Panc1 (cell line): ENCODE measurements at regions of chr6 and their contacts with region 1.

Region 1: DNA sequence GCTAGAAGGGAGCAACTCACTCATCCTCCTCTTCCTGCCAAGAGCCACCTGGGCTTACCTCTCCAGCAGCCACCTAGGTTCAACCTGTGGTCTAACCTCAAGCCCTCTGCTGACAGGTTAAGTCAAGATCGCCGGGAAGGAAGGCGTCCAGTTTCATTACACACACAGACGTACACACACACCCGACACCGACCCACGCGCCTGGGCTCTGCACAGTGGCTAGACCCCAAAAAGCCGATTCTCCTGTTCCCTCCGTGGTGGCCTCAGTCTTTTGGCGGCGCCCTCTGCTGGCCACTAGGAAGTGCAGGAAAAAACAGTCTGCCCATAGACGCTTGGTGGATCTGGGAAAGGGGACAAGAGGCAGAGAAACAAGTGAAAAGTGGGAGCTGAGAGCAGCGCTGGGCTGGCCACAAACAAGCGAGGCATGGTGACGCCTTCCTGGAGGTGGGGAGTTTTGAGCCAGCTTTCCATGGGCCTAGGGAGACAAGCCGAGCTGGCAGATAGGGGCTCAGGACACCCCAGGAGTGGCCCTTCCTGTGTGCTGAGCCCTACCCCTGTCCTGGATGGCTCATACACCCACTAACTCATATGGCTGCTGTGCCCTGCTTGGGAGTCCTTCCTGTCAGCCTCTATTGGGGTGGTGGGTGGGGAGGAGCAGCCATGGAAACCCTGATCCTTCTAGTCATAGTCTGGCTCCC is 52.7 kb downstream of the MRPL14 start:
- DNase-seq: no peak
- ATAC-seq: peak; percentile 67
- H3K4me3 ChIP-seq: no peak overlapping the region
- H3K27ac ChIP-seq: peak overlapping the region; percentile 88
- H3K4me1 ChIP-seq: peaks cover 22% of the 10 kb centered on the region
- H3K27me3 ChIP-seq: no peaks in the 10 kb centered on the region
- CTCF ChIP-seq: peak; percentile 95

Region 2: DNA sequence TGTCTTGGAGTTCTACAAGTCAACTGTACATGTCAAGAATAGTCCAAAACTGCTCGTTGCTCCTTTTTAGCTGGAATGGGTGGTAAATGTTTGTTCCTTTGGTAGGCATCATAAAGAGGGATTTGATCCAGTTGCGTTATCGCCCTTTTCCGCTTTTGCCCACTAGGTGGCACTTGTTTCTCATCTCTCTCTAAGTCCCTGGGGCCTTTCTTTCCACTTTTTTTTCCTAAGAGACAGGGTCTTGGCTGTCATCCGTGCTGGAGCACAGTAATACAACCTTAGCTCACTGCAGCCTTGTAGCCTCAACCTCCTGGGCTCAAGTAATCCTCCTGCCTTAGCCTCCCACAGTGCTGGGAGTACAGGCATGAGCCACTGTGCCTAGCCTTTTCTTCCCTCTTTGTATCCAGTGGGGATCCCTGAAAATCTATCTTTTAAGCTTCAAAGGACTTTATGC is 466.3 kb before region 1 on chr6:
- CTCF ChIA-PET with region 1: no interaction called
- POLR2A ChIA-PET with region 1: no interaction called
- in situ Hi-C with region 1: no loop called
- intact Hi-C with region 1: loop called (anchors 5 kb)
- DNase-seq: peak; percentile 70
- ATAC-seq: peak; percentile 86
- H3K4me3 ChIP-seq: no peak overlapping the region
- H3K27ac ChIP-seq: no peak overlapping the region
- H3K4me1 ChIP-seq: no peaks in the 10 kb centered on the region
- H3K27me3 ChIP-seq: no peaks in the 10 kb centered on the region
- CTCF ChIP-seq: peak; percentile 92

Region 3: DNA sequence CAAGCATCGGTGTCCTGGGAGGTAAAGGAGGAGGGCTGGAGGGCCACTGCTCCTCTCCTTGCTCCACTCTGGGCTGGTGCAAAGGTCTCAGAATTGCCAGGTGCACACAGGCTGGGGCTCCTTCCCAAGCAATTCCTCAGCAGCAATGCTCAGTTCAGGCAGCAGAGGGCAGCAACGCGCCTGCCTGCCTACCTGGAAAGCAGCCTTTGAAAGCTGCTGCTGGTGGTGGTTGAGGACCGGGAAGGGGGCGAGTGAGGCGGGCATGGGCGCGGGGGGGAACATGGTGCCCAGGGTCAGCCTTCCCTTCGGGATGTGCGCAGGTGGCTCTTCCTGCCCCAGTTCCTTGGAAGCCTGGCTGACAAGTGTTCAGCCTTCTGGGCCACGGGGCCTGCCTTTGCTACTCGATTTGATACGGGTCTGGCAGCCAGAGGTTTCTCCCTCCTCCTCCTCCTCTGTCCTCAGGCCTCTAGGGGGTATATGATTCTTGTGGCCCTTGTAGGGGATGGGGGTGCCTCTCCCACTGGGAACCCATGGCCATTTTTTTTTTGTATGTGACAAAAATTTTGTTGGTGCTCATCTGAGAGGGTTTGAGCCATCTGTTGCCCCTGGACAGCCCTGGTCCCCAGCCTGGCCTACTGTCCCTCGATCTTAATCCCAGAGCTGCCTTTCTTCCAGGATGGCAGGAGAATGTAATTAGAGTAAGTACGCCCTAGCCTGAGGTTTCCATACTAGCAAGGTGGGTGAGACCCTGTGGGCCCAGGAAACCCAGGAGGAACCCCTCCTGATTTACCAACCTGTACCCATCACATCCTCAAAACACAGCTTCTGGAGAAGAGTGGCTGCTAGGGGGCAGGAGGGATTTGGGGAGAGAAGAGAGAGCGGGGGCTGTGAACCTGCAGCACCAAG is 407.1 kb before region 1 on chr6:
- CTCF ChIA-PET with region 1: interaction called, 10 read pairs
- POLR2A ChIA-PET with region 1: no interaction called
- in situ Hi-C with region 1: no loop called
- intact Hi-C with region 1: loop called (anchors 1 kb)
- DNase-seq: no peak
- ATAC-seq: peak; percentile 75
- H3K4me3 ChIP-seq: no peak overlapping the region
- H3K27ac ChIP-seq: no peak overlapping the region; the same call in 1 of the 2 replicates
- H3K4me1 ChIP-seq: peaks cover 9% of the 10 kb centered on the region
- H3K27me3 ChIP-seq: no peaks in the 10 kb centered on the region
- CTCF ChIP-seq: peak; percentile 98

Region 4: DNA sequence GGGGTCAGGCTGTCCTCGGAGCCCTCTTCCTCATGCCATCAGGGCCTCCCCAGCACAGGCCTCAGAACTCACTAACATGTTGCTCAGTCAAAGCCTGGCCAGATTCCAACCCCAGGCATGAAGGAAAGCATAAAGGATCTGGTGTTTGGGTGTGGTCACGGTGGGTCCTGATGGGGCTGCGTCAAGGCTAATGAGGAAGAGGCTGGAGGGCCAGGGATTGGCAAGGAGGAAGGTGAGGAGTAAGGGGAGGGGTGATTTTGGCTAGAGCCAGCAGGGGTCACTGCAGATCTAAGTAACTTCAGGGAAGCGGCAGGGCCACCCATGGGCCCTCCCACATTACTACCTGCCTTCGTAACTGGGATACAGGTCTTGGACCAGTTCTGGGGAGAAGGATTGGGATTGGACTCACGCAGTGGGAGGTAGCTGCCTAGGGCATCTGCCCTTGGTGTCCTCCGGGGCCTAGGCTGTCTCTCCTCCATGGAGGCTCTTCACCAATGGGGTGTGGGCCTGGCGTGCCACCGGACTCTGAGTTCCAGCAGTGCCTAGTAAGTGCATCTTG is 350.8 kb before region 1 on chr6:
- CTCF ChIA-PET with region 1: interaction called, 4 read pairs
- POLR2A ChIA-PET with region 1: no interaction called
- in situ Hi-C with region 1: no loop called
- intact Hi-C with region 1: loop called (anchors 2 kb)
- DNase-seq: no peak
- ATAC-seq: peak; percentile 94
- H3K4me3 ChIP-seq: no peak overlapping the region
- H3K27ac ChIP-seq: no peak overlapping the region
- H3K4me1 ChIP-seq: no peaks in the 10 kb centered on the region
- H3K27me3 ChIP-seq: no peaks in the 10 kb centered on the region
- CTCF ChIP-seq: peak; percentile 84

Region 5: GRCh38 chr6:43769526-43770416 is 304.8 kb before region 1 on chr6 and contains the start of gene VEGFA:
- CTCF ChIA-PET with region 1: interaction called, 16 read pairs
- POLR2A ChIA-PET with region 1: no interaction called
- in situ Hi-C with region 1: no loop called
- intact Hi-C with region 1: loop called (anchors 1 kb)
- DNase-seq: peak; percentile 64
- ATAC-seq: peak; percentile 71
- H3K4me3 ChIP-seq: peak within 1 kb of the TSS; percentile 94 to 99
- H3K27ac ChIP-seq: peak within 1 kb of the TSS; percentile 87
- H3K4me1 ChIP-seq: peaks cover 23% of the 10 kb centered on the region
- H3K27me3 ChIP-seq: no peaks in the 10 kb centered on the region
- CTCF ChIP-seq: peak; percentile 99
- total RNA-seq, gene VEGFA: 98.7 TPM

Region 6: GRCh38 chr6:43951063-43951755 is 123.4 kb before region 1 on chr6:
- CTCF ChIA-PET with region 1: no interaction called
- POLR2A ChIA-PET with region 1: no interaction called
- in situ Hi-C with region 1: no loop called
- intact Hi-C with region 1: loop called (anchors 10 kb)
- DNase-seq: no peak
- ATAC-seq: peak; percentile 89
- H3K4me3 ChIP-seq: no peak overlapping the region
- H3K27ac ChIP-seq: peak overlapping the region; percentile 59; the same call in 1 of the 2 replicates
- H3K4me1 ChIP-seq: no peaks in the 10 kb centered on the region
- H3K27me3 ChIP-seq: no peaks in the 10 kb centered on the region
- CTCF ChIP-seq: peak; percentile 74

Region 7: DNA sequence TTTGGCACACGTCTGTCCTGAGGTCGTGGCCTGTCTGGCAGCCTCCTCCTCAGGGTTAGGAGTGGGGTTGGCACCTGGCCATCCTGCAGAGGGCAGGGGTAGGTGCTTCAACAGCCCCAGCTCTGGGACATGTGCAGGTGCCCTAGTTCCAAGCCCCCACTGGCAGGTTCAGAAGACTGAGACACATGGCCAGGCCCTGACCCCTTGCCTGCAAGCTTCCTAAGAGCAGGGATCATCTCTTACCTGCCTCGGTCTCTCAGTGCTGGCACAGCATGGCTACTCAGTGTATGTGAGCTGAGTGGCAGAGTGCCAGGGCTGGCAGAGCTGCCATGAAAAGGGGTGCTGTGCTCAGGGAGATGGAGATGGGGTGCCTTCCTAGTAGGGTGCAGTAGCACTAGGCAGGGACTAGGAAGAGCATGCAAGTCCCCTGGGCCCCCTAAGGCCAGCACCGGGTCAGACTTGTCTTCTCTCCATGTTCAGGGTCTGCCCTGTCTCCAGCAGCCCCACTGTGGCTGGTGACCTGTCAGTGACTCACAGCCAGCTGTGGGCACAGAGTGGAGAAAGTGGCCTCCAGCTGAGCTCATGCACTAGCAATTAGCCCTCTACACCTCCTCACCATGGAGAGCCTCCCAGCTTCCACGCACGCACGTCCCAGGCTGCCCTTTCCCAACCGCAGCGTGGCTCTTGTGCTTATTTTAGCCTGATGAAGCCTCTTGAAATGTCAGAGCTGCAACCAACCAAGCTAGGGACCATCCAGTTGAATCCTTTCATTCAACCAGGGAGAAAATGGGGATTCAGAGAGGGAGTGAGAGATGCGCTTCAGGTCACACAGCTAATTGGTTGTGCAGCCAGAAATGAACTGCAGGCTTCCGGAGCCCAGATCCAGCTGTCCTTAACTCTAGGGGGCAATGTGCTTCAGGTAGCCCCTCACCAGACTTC is 63.9 kb before region 1 on chr6:
- CTCF ChIA-PET with region 1: no interaction called
- POLR2A ChIA-PET with region 1: no interaction called
- in situ Hi-C with region 1: no loop called
- intact Hi-C with region 1: loop called (anchors 1 kb)
- DNase-seq: peak; percentile 80
- ATAC-seq: peak; percentile 93
- H3K4me3 ChIP-seq: no peak overlapping the region
- H3K27ac ChIP-seq: peak overlapping the region; percentile 51
- H3K4me1 ChIP-seq: peaks cover 22% of the 10 kb centered on the region
- H3K27me3 ChIP-seq: no peaks in the 10 kb centered on the region
- CTCF ChIP-seq: no peak

Region 8: DNA sequence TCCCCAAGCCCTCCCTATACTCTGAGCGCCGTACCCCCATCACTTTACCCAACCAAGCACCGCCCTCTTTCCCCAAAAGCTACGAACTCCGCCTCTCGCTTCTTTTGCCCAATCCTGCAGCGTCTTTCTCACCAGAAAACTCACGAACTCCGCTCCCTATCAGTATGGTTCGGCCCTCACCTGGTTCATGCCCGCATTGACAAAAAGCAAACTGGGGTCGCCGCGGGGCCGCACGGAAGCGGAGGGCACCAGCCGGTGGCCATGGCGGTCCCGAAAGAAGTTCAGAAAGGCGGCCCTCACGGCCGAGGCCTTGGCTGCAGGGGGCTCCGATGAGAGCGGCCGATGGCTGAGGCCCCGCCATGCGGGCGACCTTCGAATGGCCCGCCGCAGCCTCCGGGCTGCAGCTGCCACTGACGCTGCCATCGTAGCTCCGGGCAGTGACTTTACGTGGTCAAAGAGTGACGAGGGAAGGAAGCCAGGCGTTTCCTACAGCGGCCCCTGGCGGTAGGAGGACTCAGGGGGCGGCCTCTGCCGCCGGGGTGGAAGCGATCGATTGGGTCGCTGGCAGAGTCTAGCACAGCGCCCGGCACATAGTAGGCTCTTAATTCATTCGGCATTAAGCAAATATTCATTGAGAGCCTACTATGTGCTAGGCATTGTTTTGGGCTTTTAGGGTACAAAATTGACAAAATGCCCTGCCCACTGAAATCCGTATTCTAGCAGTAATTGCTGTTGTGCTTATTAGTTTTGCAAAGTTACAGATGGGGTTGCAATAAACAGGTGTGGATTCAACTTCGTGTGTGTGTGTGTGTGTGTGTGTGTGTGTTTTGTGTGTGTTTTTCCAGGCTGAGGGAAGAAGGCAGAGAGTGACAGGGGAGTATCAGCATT is 238.6 kb after region 1 on chr6 and contains the start of gene AARS2:
- CTCF ChIA-PET with region 1: no interaction called
- POLR2A ChIA-PET with region 1: no interaction called
- in situ Hi-C with region 1: no loop called
- intact Hi-C with region 1: no loop called
- DNase-seq: peak; percentile 65
- ATAC-seq: peak; percentile 99
- H3K4me3 ChIP-seq: peak within 1 kb of the TSS; percentile 66 to 98
- H3K27ac ChIP-seq: peak within 1 kb of the TSS; percentile 81
- H3K4me1 ChIP-seq: peaks cover 7% of the 10 kb centered on the region; the same call in 1 of the 2 replicates
- H3K27me3 ChIP-seq: peaks cover 4% of the 10 kb centered on the region
- CTCF ChIP-seq: peak; percentile 98
- total RNA-seq, gene AARS2: 13.1 TPM